Aorta (tissue), 5 donors: ENCODE measurements at regions of chr5 and their contacts with region 1.

Region 1: DNA sequence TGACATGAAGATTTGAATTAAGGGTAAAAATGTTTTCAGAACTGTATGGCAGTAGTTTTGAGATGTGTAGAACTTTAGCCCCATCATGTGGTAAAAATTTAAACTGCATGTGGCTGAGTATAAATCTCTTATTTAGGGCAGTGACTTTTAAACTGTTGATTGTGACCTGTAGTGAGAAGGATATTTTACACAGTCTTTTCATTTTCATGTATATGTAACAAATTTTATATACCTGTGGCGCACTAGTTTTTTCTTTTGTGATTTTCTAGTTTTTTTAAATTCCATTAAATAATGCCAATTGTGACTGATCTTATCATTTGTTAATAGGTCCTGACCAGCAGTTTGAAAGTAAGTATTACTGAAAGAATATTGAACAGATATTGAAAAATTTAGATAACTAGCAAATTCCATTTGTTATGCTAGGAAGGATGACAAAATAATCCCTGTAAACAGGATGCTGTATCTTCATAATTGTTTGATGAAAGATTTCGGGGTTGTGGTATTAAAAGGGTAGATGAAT is 47.2 kb downstream of the GPBP1 start:
- DNase-seq: no peak
- ATAC-seq: peak; percentile 78
- H3K4me3 ChIP-seq: no peak overlapping the region
- H3K27ac ChIP-seq: no peak overlapping the region
- H3K4me1 ChIP-seq: no peaks in the 10 kb centered on the region
- H3K27me3 ChIP-seq: no peaks in the 10 kb centered on the region

Region 2: DNA sequence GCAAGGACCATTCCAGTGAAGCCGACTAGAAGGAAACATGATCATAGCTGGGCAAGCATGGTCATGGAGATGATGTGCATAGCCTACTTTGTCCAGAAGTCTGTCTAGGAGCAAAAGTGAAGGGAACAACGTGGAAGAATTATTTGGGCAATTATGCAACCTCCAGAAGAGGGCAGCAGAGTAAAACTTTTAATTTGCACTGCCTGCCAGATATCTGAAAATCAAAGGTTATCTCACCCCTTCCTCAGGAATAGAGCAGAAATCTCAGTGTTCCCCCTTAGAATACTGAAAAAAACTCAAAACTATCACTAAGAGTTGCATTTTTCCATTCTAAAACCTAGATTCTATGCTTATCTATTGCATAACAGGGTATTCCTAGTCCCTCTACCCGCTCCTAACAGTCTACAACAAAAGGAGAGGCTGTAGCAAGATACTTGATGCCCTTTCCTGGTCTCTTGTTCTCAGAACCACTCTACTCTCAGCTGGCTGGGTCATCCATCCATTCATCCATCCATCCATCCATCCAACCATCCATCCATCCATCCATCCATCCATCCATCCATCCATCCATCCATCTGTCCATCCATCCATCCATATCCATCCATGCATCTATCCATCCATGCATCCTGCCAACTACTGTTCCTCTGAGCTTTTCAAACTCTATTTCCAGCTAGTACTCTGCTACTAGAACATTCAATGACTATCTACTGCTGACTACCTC is 320.1 kb before region 1 on chr5:
- intact Hi-C with region 1: loop called (anchors 5 kb)
- DNase-seq: no peak
- ATAC-seq: peak; percentile 78
- H3K4me3 ChIP-seq: no peak overlapping the region
- H3K27ac ChIP-seq: no peak overlapping the region
- H3K4me1 ChIP-seq: no peaks in the 10 kb centered on the region
- H3K27me3 ChIP-seq: peaks cover 0 to 1% of the 10 kb centered on the region in 2 donors

Region 3: DNA sequence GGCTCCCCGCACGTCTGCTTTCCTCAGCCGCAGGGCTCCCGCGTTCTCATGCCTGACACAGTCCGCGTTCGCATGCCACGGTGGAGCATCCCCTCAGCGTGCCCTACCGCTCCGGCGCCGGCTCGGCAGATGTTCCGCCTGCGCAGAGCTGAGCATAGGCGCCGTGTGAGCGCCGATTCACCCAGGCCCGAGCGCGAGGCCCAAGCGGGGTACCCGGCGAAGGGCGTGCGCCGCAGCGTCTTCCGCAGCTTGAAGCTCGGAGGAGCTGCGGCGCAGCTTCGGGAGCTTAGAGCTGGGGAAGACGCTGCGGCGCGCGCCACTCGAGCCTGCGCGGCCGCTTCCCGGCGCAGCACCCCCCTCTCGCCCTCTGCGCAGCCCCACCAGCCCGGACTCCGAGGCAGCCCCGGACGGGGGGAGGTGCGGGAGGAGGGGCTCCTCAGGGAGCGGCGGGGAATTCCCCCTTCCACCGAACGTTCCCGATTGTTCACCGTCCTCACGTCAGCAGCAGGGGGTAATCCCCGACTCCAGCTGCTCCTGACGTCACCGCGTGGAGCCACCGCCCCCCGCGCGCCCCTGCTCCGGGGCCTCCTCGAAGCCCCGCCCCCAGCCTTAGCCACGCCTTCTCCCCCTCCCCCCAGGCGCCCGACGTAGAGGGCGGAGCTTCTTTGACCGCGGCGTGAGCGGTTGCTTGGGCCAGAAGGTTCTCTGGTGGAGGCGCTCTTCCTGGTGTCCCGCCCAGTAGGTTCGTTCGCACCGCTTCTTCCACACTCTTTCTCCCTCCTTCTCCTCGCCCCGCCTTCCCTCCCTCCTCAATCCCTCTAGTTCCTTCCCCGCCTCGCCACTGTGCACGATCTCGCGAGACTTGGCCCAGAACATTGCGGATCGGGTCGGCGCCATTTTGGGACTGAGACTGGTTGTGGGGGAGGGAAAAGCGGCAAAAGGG is 47.7 kb before region 1 on chr5 and contains the start of gene GPBP1:
- intact Hi-C with region 1: loop called (anchors 5 kb)
- DNase-seq: peak; percentile 100
- ATAC-seq: peak; percentile 98
- H3K4me3 ChIP-seq: peak within 1 kb of the TSS; percentile 60 to 80
- H3K27ac ChIP-seq: peak within 1 kb of the TSS; percentile 70 to 78
- H3K4me1 ChIP-seq: no peaks in the 10 kb centered on the region
- H3K27me3 ChIP-seq: no peaks in the 10 kb centered on the region
- total RNA-seq, gene GPBP1: 63.0 to 79.0 TPM